H1 (cell line): ENCODE measurements at regions of chr19 and their contacts with region 1.

Region 1: DNA sequence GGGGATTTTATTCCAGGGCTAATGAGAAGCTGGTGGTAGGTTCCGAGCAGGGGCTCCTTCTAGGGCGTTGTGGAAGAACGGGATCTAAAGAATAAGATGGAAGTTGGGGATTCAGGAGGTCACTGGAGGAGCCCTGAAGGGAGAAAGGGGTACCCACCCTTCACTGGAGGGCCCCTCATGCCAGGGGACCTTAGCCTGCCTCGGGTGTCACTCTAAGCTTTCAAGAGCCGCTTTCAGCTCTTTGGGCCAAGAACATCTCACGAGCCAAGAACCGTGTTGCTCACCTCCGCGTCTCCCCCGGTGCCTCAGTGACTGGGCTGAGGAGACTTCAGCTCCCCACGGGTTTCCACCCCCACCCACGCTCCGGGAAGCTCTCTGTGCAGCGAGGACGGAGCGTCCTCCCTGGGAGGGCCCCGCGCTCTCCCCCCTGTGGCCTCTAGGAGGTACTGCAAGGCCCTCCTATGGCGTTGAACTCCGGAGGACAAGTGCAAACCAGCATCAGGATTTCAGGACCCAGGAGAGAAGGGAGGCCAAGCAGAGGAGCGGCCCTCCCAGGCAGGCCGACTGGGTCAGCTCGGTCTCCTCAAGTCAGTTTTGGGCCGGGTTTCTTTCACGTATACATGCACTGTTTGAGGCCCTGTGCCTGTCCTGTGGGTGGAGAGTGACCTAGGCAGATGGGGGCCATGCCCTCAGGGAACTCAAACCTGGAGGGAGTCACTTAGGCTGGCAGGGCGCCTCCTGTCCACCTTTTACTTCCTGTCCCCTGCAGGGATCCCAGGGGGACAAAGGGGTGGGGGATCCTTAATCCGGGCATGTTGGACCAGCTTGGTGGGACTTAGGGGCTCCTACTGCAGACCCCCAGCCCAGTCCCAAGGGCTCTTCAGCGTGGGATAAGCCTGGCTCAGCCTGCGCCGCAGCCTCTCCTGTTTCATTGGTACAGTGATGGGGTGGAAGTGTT is 5.1 kb upstream of the KRTDAP start:
- DNase-seq: peak in 1 of 2 experiments; percentile 77
- H3K4me3 ChIP-seq: no peak overlapping the region
- H3K27ac ChIP-seq: no peak overlapping the region
- H3K4me1 ChIP-seq: peaks cover 0 to 5% (median 3%) of the 10 kb centered on the region in 4 experiments; a peak in 3 of 7 replicates
- H3K27me3 ChIP-seq: no peaks in the 10 kb centered on the region; a peak in 1 of 7 replicates
- CTCF ChIP-seq: peak; percentile 87 to 96 (median 90)
- EP300 ChIP-seq: no peak
- POLR2A ChIP-seq: no peak
- RAD21 ChIP-seq: peak; percentile 67 to 78

Region 2: GRCh38 chr19:35352448-35353304 is 142.7 kb before region 1 on chr19:
- CTCF ChIA-PET with region 1: interaction called, 21 read pairs
- POLR2A ChIA-PET with region 1: interaction called, 4 read pairs
- DNase-seq: peak; percentile 33 to 77
- H3K4me3 ChIP-seq: no peak overlapping the region
- H3K27ac ChIP-seq: no peak overlapping the region
- H3K4me1 ChIP-seq: peaks cover 0 to 2% (median 0%) of the 10 kb centered on the region in 4 experiments; a peak in 2 of 7 replicates
- H3K27me3 ChIP-seq: no peaks in the 10 kb centered on the region
- CTCF ChIP-seq: peak; percentile 77 to 95 (median 93)
- EP300 ChIP-seq: no peak
- POLR2A ChIP-seq: no peak
- RAD21 ChIP-seq: peak; percentile 92 to 95

Region 3: GRCh38 chr19:35417713-35418534 is 77.5 kb before region 1 on chr19:
- CTCF ChIA-PET with region 1: interaction called, 11 read pairs
- POLR2A ChIA-PET with region 1: interaction called, 3 read pairs
- DNase-seq: no peak
- H3K4me3 ChIP-seq: no peak overlapping the region
- H3K27ac ChIP-seq: no peak overlapping the region
- H3K4me1 ChIP-seq: no peaks in the 10 kb centered on the region
- H3K27me3 ChIP-seq: no peaks in the 10 kb centered on the region
- CTCF ChIP-seq: no peak
- EP300 ChIP-seq: no peak
- POLR2A ChIP-seq: no peak
- RAD21 ChIP-seq: no peak

Region 4: GRCh38 chr19:35478803-35479601 is 16.4 kb before region 1 on chr19:
- CTCF ChIA-PET with region 1: interaction called, 14 read pairs
- POLR2A ChIA-PET with region 1: interaction called, 5 read pairs
- DNase-seq: no peak
- H3K4me3 ChIP-seq: no peak overlapping the region
- H3K27ac ChIP-seq: no peak overlapping the region
- H3K4me1 ChIP-seq: no peaks in the 10 kb centered on the region
- H3K27me3 ChIP-seq: no peaks in the 10 kb centered on the region
- CTCF ChIP-seq: peak in 1 of 3 experiments; percentile 10; a peak in 1 of 4 replicates
- EP300 ChIP-seq: no peak
- POLR2A ChIP-seq: no peak
- RAD21 ChIP-seq: no peak; a peak in 1 of 4 replicates

Region 5: DNA sequence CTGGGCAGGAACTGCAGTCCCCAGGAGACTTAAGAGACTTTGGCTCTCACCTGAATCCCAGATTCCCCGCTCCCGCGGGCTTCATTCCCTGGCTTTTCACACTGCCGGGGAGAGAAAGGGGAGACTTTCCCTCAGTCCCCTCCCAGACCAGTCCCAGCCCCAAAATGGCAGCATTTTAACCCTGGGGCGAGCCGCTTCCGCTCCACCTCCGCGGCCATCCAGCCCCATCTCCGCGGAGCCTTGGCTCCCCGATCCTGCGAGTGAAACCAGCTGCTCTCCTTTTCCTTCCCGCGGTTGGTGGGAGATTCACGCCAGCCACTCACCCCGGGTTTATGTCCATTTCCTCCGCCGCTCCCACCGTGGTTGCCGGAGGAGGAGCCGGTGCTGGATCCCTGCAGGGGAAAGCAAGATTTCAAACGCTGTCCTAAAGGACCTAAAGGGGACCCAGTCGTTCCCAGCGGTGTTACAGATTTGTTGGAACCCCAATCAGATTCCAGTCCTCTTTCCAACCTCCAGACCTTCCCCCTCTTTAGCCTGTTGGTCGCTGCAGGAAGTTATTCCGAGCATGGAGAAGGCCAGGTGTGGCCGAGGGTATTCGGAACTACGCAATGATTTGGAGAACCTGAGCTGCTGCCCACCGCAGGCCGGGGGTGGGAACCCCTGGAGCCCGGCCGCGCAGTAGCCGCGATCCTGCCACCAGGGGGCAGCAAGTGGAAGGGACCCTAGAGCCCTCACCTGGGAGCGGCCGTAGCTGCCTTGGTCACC is 14.7 kb after region 1 on chr19:
- CTCF ChIA-PET with region 1: interaction called, 32 read pairs
- POLR2A ChIA-PET with region 1: interaction called, 110 read pairs
- DNase-seq: peak; percentile 78 to 98
- H3K4me3 ChIP-seq: peak overlapping the region; percentile 77 to 99 (median 93)
- H3K27ac ChIP-seq: peak overlapping the region; percentile 92
- H3K4me1 ChIP-seq: peaks cover 0 to 25% (median 21%) of the 10 kb centered on the region in 4 experiments; a peak in 6 of 7 replicates
- H3K27me3 ChIP-seq: peaks cover 0 to 11% (median 6%) of the 10 kb centered on the region in 4 experiments; a peak in 3 of 7 replicates
- CTCF ChIP-seq: peak; percentile 94 to 97 (median 96)
- EP300 ChIP-seq: peak in 1 of 2 experiments; percentile 56; a peak in 1 of 3 replicates
- POLR2A ChIP-seq: peak; percentile 94
- RAD21 ChIP-seq: peak; percentile 71 to 80